Pancreas (tissue), 10 donors: ENCODE measurements at regions of chr17 and their contacts with region 1.

Region 1: DNA sequence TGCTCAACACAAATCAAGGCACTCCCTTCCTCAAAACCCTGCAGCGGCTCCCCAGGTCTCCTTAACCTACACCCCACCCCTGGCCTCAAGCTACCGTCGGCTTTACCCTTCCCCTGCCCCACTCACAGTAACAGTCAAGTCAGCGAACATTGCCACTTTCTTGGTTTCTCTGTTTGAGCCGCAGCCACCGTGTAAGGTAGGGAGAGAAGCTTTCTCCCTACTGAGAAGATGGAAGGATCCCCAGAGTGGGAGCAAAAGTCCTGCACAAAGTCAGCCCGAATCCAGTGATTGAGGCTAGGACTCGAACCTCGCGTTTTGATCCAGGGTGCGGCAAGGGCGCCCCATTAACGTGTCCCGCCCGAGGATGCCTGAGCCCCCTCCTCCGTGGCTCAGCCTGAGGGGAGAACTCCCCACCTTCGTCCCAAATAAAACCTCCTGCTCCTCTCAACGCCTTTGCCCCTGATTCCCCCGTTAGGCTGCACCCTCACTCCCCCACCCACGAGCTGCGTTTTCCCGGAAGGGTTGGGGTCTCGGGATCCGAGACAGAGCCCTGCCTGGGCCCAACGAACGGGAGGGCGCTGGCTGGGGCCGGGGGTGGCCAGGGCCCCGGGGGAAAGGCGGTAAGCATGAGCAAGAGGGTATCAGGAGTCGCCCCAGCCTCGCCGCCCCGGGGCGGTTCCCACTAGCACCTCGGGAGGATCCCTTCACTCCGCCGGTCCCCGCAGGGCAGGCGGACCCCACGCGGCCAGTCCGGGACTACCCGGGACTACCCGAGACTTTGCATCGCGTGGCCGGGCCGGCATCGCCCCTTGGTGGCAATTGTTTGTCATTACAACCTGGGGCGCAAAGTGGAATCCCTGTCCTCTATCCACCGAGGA is 9.9 kb upstream of the NAGS start:
- DNase-seq: peak in 5 of 6 donors; percentile 42 to 90 (median 75)
- ATAC-seq: peak; percentile 88 to 98 (median 94)
- H3K4me3 ChIP-seq: peak overlapping the region in 2 of 4 donors; percentile 8 to 39
- H3K27ac ChIP-seq: no peak overlapping the region
- H3K4me1 ChIP-seq: no peaks in the 10 kb centered on the region
- H3K27me3 ChIP-seq: peaks cover 0 to 5% (median 0%) of the 10 kb centered on the region in 4 donors
- CTCF ChIP-seq: peak; percentile 66 to 82 (median 80)

Region 2: DNA sequence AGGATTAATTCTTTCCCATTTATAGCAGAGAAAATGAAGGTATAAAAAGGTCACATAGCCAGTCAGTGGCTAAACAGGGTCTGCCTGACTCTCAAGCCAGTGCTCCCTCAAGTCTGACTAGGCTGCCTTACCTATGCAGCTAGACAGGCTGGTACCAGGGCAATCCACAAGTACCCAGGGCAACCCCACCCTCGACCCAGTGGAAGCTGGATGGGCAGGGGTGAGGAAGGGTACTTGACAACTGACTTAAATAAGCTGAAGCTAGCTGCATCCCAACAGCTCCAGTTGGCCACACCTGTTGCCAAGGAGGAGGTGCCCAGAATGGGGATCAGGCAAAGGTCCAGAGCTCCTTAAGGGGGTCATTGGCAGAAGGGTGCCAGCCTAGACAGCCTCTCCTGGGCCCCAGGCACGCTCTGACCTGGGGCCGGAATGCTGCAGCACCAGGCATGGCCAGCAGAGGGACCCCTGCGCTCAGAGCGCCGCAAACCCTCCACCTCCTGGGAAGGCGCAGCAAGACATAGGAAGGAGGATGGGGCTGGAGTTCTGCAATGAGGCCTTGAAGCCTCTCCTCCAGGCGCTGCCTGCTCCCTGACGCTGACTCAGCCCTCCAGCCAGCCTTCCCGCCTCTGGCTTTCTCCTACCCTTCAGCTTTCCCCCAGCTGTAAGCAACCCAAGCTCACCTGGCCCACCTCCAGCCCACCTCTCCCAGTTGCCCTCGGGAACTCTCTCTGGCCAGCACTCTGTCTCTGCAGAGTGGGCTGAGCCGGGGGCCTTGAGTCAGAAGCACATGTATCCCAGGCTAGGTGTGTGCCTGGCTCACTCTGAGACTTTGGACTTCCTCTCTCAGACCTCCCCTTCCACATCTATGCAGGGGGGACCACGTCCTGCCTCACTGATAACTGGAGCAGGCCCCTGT is 116.0 kb before region 1 on chr17:
- intact Hi-C with region 1: loop called in 1 of 3 experiments (anchors 10 kb)
- DNase-seq: peak; percentile 50 to 90 (median 77)
- ATAC-seq: peak; percentile 87 to 96 (median 92)
- H3K4me3 ChIP-seq: no peak overlapping the region
- H3K27ac ChIP-seq: no peak overlapping the region
- H3K4me1 ChIP-seq: no peaks in the 10 kb centered on the region
- H3K27me3 ChIP-seq: no peaks in the 10 kb centered on the region
- CTCF ChIP-seq: peak; percentile 94 to 96 (median 95)

Region 3: GRCh38 chr17:43940630-43941029 is 53.9 kb before region 1 on chr17:
- intact Hi-C with region 1: loop called in 2 of 3 experiments (anchors 5 to 10 kb)
- DNase-seq: no peak
- ATAC-seq: peak in 2 of 4 donors; percentile 4 to 9
- H3K4me3 ChIP-seq: no peak overlapping the region
- H3K27ac ChIP-seq: no peak overlapping the region
- H3K4me1 ChIP-seq: no peaks in the 10 kb centered on the region
- H3K27me3 ChIP-seq: no peaks in the 10 kb centered on the region
- CTCF ChIP-seq: peak in 1 of 4 donors; percentile 10